ENCODE measurements at regions of chrX and their contacts with region 1.

Region 1: DNA sequence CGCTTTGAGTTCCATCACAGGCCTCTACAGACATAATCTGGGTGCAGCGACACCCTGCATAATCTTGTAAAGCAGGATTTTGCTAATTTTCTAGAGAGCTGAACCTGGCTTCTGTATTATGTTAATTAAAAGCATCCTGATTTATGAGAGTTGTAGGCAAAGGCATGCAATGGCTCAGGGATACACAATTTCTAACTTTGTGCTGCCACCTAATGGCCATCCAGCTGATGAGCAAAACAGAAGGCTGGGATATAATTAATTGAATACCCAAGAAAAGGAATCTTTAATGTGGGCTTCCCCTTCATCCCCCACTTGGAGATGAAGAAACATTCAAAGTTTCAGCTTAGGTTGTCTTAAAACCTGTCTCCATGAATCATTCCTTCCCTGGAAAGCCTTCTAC is 78.1 kb downstream of the BMP15 start:
- DNase-seq: no peak

Region 2: DNA sequence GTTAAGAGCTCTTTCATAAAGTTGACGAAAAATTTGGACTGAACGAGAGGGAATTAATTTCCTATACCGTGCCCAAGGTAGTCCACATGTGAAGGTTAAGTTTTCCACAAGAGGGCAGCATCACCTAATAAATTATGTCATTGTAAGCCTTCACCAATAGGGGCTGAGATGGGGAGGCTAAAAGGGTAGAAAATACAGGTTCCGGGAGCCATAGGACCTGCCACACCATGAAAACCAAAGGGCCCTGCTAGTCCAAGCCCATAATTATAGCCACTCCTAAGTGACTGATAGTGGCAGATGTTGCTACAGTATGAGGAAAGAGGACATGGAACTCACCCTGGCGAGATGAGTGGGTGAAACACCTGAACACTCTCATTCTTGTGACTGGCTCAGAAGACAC is 296.8 kb before region 1 on chrX:
- intact Hi-C with region 1: loop called (anchors 2 kb)
- DNase-seq: no peak

Measured in cardiac septum (tissue), 1 donor.